GM18951 (cell line): ENCODE measurements at regions of chr14 and their contacts with region 1.

Region 1: GRCh38 chr14:36070031-36070719 is 106.3 kb downstream of the PTCSC3 start:
- POLR2A ChIP-seq: no peak

Region 2: DNA sequence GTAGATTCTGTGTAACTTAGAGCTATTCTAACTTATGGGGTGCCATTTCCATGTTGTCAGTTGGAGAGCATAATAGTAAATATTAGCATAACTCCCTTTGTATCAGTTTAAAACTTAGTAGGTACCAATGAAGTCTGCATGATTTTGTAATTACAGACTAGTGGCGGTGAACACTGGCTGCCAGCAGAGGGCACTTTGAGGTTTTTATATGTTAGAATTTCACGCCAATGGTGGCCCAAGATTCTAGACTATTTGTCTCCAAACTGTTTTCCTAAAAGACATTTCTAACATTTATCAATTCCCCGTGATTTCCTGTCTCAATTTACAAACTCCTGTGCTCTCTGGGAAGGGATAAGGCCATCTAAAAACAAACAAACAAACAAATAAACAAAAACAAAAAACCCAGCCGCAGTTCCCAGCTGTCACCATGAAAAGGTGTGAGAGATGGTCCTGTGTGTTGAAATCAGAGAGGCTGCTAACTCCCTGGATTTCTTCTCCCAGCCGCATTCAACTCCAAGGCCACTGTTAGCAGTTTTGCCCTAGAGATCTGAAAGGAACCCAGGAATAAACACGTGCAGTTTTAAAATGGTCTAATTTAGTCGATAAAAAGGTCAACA is 186.4 kb before region 1 on chr14:
- in situ Hi-C with region 1: loop called (anchors 25 kb)
- POLR2A ChIP-seq: no peak

Region 3: GRCh38 chr14:36333119-36333518 is 262.9 kb after region 1 on chr14:
- in situ Hi-C with region 1: no loop called
- POLR2A ChIP-seq: no peak

Region 4: GRCh38 chr14:36373982-36374673 is 304.0 kb after region 1 on chr14:
- in situ Hi-C with region 1: loop called (anchors 10 kb)
- POLR2A ChIP-seq: no peak